Psoas muscle (tissue), 8 donors: ENCODE measurements at regions of chr1 and their contacts with region 1.

Region 1: GRCh38 chr1:63537940-63538339 is 14.6 kb downstream of the EFCAB7 start:
- DNase-seq: no peak
- ATAC-seq: no peak
- H3K4me3 ChIP-seq: no peak overlapping the region
- H3K27ac ChIP-seq: no peak overlapping the region
- H3K4me1 ChIP-seq: no peaks in the 10 kb centered on the region
- H3K27me3 ChIP-seq: no peaks in the 10 kb centered on the region
- CTCF ChIP-seq: peak; percentile 48

Region 2: DNA sequence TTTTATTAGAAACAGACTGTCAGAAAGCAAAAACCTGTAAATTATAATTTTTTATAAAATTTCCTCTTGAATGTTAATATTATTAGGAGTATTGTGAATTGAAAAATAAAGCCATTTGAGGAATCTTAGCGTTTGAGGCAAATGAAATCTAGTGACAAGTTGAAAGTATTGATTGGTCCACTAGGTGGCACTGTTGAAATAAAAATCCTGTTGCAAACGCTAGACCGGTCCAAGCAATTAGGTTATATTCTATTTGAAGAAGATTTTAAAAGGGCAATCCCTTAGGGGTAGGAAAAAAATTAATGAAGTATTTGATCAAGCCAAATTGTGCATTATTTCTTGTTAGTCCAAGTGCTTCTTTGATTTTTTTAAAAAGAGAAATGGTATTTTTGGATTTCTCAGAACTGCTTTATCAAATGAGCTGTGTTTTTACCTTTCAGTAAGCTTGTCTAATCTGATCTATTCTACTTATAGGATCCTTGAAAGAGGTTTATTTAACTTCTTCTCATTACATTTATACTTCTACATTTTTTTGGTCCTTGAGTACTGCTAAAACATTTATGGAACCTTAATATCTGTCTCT is 696.3 kb before region 1 on chr1:
- intact Hi-C with region 1: loop called (anchors 5 to 10 kb)
- DNase-seq: no peak
- ATAC-seq: peak; percentile 75 to 92 (median 82)
- H3K4me3 ChIP-seq: no peak overlapping the region
- H3K27ac ChIP-seq: no peak overlapping the region
- H3K4me1 ChIP-seq: no peaks in the 10 kb centered on the region
- H3K27me3 ChIP-seq: no peaks in the 10 kb centered on the region
- CTCF ChIP-seq: peak; percentile 73

Region 3: DNA sequence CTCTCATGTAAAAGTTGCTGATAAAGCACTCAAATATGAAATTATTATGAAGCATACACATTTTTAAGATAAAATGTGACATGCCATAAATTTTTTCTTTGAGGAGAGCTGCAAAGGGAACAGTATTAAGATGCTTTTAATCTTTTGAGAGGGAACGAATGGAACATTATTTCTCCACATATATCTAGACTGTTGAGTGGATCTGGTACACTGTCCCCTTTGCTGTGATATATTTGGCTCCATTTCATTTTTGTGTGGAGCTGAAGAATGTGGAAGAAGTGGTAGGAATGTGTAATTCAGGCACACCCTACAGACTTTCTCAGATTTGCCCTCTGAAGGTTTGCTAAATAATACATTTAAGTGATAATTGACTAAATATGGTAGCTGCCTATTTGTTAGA is 87.0 kb after region 1 on chr1:
- intact Hi-C with region 1: no loop called
- DNase-seq: no peak
- ATAC-seq: no peak
- H3K4me3 ChIP-seq: peak overlapping the region; percentile 60
- H3K27ac ChIP-seq: peak overlapping the region; percentile 81
- H3K4me1 ChIP-seq: peaks cover 77% of the 10 kb centered on the region
- H3K27me3 ChIP-seq: no peaks in the 10 kb centered on the region
- CTCF ChIP-seq: peak; percentile 21